GM10248 (cell line): ENCODE measurements at regions of chr2 and their contacts with region 1.

Region 1: DNA sequence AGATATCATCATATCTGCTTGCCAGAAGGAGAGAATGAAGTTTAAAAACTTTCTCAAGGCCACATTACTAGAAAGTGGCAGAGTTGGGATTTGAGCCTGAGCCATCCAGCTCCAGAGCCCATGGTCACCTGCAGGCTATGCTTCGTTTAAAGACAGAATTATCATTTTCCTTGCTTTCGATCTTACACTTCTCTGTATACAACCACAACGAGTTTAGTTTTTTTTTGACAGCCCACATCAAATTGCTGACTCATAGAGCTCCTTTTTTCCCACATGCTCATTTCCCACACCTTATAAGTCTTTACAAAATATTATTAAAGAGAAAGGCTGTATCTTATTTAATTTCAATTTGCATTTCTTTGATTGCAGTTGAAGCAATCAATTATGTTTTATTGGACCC is 6.5 kb downstream of the PLEK start:
- DNase-seq: no peak
- CTCF ChIP-seq: no peak

Region 2: DNA sequence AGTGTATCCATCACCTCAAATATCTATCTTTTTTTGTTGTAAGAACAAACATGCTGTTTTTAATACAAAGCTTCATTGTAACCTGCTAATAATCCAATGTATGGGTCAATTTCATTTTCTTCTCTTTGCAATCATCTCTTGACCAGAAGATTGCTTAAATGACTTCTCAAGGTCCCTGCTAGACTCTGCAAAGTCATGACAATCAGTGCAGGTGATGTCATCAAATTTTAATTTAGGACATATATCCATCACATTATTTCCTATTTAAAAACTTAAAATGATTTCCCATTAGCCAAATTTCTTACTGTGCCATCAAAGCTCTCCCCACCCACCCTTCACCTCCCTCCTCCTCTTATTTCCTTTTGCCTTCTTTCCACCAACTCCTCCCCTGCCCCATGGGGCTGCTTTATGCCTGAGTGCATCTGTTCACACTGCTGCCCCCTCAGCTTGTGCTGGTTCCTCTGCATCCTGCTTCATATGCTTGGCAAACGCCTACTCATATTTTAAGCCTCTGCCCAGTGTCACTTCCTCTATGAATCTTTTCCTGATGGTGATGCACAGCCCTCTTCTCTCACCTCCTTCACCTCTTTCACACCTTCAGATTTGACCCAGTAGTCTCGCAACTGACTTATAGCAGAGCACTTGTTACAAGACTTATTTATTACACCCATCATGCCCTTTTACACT is 13.8 kb after region 1 on chr2:
- CTCF ChIA-PET with region 1: interaction called, 11 read pairs
- POLR2A ChIA-PET with region 1: interaction called, 3 read pairs
- DNase-seq: peak; percentile 31
- CTCF ChIP-seq: no peak

Region 3: DNA sequence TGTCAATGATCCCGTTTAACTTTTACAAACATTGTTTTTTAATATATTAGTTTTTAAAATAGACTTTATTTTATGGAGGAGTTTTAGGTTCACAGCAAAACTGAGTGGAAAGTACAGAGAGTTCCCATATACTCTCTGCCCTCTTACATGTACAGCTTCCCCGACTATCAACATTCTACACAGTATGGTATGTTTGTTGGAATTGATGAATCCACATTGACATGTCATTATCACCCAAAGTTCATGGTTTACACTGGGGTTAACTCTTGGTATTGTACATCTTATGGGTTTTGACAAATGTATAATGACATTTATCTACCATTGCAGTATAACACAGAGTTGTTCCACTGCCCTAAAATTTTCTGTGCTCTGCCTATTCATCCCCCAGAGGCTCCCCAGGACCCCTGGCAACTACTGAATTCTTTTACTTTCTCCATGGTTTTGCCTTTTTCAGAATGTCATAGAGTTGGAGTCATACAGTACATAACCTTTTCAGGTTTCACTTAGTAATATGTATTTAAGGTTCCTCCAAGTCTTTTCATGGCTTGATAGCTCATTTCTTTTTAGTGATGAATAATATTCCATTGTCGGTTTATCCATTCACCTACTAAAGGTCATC is 101.3 kb after region 1 on chr2:
- CTCF ChIA-PET with region 1: no interaction called
- POLR2A ChIA-PET with region 1: no interaction called
- DNase-seq: no peak
- CTCF ChIP-seq: no peak

Region 4: DNA sequence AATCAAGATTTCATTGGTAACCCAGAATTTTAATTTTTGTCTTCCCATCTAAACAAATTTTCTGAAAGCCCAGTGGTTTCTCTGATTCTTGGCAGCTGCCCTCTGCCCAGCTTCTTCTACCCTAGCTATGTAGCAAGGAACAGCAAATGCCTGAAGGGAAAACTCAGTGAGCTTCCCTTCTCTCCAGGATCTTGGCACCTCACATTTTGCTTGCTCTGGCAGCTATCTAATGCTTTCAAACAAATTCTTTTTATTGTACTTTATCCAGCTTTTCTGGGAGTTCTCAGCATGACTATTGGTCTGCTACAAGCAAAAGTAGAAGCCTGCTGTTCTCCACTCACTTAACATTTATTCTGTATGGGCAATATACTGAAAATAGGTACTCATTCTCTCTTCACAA is 1033.7 kb after region 1 on chr2:
- CTCF ChIA-PET with region 1: no interaction called
- POLR2A ChIA-PET with region 1: no interaction called
- DNase-seq: no peak
- CTCF ChIP-seq: no peak